GM23248 (cell line): ENCODE measurements at regions of chr14 and their contacts with region 1.

Region 1: GRCh38 chr14:36373982-36374673 is 53.7 kb upstream of the MBIP start:
- DNase-seq: peak; percentile 84
- H3K4me3 ChIP-seq: no peak overlapping the region
- H3K27ac ChIP-seq: no peak overlapping the region
- H3K4me1 ChIP-seq: no peaks in the 10 kb centered on the region
- H3K27me3 ChIP-seq: no peaks in the 10 kb centered on the region

Region 2: DNA sequence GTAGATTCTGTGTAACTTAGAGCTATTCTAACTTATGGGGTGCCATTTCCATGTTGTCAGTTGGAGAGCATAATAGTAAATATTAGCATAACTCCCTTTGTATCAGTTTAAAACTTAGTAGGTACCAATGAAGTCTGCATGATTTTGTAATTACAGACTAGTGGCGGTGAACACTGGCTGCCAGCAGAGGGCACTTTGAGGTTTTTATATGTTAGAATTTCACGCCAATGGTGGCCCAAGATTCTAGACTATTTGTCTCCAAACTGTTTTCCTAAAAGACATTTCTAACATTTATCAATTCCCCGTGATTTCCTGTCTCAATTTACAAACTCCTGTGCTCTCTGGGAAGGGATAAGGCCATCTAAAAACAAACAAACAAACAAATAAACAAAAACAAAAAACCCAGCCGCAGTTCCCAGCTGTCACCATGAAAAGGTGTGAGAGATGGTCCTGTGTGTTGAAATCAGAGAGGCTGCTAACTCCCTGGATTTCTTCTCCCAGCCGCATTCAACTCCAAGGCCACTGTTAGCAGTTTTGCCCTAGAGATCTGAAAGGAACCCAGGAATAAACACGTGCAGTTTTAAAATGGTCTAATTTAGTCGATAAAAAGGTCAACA is 490.3 kb before region 1 on chr14:
- in situ Hi-C with region 1: loop called (anchors 10 kb)
- DNase-seq: peak; percentile 61
- H3K4me3 ChIP-seq: no peak overlapping the region
- H3K27ac ChIP-seq: no peak overlapping the region
- H3K4me1 ChIP-seq: peaks cover 12% of the 10 kb centered on the region
- H3K27me3 ChIP-seq: no peaks in the 10 kb centered on the region

Region 3: DNA sequence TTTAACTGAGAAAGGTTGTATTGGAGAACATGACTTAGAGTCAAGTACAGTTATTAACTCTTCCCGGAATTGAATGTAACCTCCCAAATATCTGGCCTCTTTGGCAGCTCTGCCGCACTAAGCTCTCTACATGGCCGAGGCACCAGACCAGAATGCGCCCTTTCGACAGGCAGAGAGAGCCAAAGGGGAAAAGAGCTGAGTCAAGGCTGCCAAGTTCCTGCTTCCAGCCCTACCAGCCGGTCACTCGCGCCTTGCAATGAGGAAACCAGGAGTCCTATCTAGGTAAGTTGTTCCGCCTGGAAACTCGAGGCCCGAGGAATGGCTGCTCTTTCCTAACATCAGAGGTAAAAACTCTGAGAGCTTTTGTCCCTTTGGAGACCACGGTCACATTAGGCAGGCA is 375.8 kb before region 1 on chr14:
- in situ Hi-C with region 1: no loop called
- DNase-seq: no peak
- H3K4me3 ChIP-seq: no peak overlapping the region
- H3K27ac ChIP-seq: no peak overlapping the region
- H3K4me1 ChIP-seq: no peaks in the 10 kb centered on the region
- H3K27me3 ChIP-seq: peaks cover 12% of the 10 kb centered on the region

Region 4: GRCh38 chr14:36070031-36070719 is 304.0 kb before region 1 on chr14:
- in situ Hi-C with region 1: loop called (anchors 10 kb)
- DNase-seq: peak; percentile 85
- H3K4me3 ChIP-seq: no peak overlapping the region
- H3K27ac ChIP-seq: no peak overlapping the region
- H3K4me1 ChIP-seq: peaks cover 14% of the 10 kb centered on the region
- H3K27me3 ChIP-seq: 0 out of 2 replicates have a peak, but pooled peaks cover 4% of the 10 kb centered on the region